ENCODE measurements at regions of chr3 and their contacts with region 1.

Region 1: GRCh38 chr3:63768386-63768785 is 50.7 kb upstream of the C3orf49 start:
- DNase-seq: no peak
- ATAC-seq: no peak

Region 2: GRCh38 chr3:63595221-63595620 is 173.2 kb before region 1 on chr3:
- intact Hi-C with region 1: loop called (anchors 5 kb)
- DNase-seq: no peak
- ATAC-seq: no peak

Measured in sciatic nerve (tissue), 2 donors.